Mammary epithelial cell (primary cell): ENCODE measurements at regions of chr12 and their contacts with region 1.

Region 1: GRCh38 chr12:77010691-77011548 is 54.4 kb downstream of the E2F7 start:
- DNase-seq: peak; percentile 50
- H3K4me3 ChIP-seq: no peak overlapping the region
- H3K27ac ChIP-seq: no peak overlapping the region
- H3K4me1 ChIP-seq: no peaks in the 10 kb centered on the region
- H3K27me3 ChIP-seq: no peaks in the 10 kb centered on the region
- CTCF ChIP-seq: peak; percentile 99

Region 2: DNA sequence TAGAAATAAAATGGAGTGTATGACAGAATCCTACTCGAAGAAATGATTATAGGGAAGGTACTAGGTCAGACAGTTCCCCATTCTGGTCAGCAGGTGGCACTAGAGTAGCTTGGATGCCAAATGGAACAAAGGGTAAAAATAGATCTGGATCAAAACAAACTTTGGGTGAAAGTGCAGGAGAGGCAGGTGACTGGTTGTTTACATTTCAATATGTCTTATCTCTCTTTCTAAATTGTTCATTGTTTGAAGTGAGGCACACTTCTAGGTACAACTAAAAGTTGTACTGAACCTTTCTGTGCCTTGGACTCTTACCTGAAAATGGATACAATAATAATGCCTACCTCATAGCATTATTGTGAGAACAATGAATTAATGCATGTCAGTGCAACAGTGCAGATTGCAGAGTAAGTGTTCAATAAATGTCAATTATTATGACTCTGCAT is 389.3 kb before region 1 on chr12:
- CTCF ChIA-PET with region 1: interaction called, 4 read pairs
- dilution Hi-C with region 1: no loop called
- in situ Hi-C with region 1: no loop called
- intact Hi-C with region 1: loop called (anchors 1 kb)
- DNase-seq: peak; percentile 48
- H3K4me3 ChIP-seq: no peak overlapping the region
- H3K27ac ChIP-seq: no peak overlapping the region
- H3K4me1 ChIP-seq: no peaks in the 10 kb centered on the region
- H3K27me3 ChIP-seq: no peaks in the 10 kb centered on the region
- CTCF ChIP-seq: peak; percentile 90 to 96

Region 3: DNA sequence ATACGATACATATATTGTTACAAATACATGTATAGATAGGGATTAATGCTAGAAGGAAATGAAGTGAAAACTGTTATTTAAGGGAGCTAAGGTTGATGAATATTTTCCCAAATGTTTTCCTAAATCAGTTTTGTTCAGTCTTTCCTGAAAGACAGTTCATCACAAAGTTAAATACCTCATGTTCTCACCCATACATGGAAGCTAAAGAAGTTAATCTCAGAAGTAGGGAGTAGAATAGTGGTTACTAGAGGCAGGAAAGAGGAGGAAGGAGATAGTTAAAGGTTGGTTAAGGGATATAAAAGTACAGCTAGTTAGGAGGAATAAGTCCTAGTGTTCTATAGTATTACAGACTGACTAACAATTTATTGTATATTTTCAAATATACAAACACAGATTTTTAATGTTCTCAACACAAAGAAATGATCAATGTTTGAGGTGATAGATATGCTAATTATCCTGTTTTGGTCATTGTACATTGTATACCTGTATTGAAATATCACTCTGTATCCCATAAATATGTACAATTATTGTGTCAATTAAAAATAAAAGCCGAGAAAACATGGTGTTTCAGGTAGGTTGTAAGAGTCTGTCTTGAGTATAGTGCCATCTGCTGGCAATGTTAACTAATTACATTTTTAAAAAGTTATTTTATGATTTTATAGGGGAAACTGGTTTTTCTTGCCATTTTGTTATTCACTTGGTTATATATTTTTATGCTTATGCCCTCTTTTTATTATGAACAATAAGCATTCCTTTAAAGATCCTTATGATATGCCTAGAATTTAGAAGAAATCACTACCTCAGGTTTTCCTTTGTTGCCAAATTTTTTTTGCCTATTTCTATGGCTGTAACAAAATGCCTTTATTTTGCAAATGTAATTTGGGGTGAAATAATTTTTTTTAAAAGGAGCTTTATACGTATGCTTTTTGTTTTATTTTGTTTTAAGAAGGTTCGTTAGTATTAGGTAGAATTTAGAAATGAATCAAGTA is 220.1 kb before region 1 on chr12:
- CTCF ChIA-PET with region 1: no interaction called
- dilution Hi-C with region 1: no loop called
- in situ Hi-C with region 1: no loop called
- intact Hi-C with region 1: loop called (anchors 1 kb)
- DNase-seq: no peak
- H3K4me3 ChIP-seq: no peak overlapping the region
- H3K27ac ChIP-seq: no peak overlapping the region
- H3K4me1 ChIP-seq: no peaks in the 10 kb centered on the region
- H3K27me3 ChIP-seq: no peaks in the 10 kb centered on the region
- CTCF ChIP-seq: peak; percentile 34 to 60

Region 4: DNA sequence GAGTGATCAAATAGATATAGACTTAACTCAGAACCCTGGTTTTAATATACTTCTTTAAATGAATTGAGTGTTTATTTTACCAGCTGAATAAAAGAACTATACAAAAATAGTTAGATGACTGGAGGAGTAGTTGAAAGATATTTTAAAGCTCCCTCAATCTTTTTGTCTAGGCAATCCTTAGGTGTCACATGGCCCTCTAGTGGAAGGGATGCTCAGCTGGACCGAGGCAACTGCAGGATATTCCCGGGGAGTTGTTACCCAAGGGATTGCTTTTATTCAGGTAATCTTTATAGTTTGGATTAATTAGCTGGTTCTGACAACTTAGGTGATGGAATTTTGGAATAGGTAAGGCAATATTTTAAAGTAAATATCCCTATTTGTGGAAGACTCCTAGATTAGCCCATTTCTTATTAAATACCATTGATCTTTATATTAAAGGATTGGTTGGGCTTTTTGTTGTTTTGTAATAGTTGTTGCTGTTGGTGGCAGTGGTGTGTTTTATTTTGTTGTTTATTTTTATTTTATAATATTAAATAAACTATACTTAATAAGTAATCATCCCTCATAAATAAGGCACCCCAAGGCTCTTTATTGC is 189.9 kb before region 1 on chr12:
- CTCF ChIA-PET with region 1: interaction called, 4 read pairs
- dilution Hi-C with region 1: no loop called
- in situ Hi-C with region 1: no loop called
- intact Hi-C with region 1: loop called (anchors 1 kb)
- DNase-seq: peak; percentile 29
- H3K4me3 ChIP-seq: no peak overlapping the region
- H3K27ac ChIP-seq: no peak overlapping the region
- H3K4me1 ChIP-seq: no peaks in the 10 kb centered on the region
- H3K27me3 ChIP-seq: no peaks in the 10 kb centered on the region
- CTCF ChIP-seq: peak; percentile 74

Region 5: GRCh38 chr12:76878899-76879709 is 131.8 kb before region 1 on chr12 and contains the start of gene CSRP2:
- CTCF ChIA-PET with region 1: no interaction called
- dilution Hi-C with region 1: no loop called
- in situ Hi-C with region 1: no loop called
- intact Hi-C with region 1: loop called (anchors 2 kb)
- DNase-seq: peak; percentile 90
- H3K4me3 ChIP-seq: peak within 1 kb of the TSS; percentile 72 to 81 (median 80)
- H3K27ac ChIP-seq: peak within 1 kb of the TSS; percentile 81
- H3K4me1 ChIP-seq: peaks cover 46% of the 10 kb centered on the region
- H3K27me3 ChIP-seq: no peaks in the 10 kb centered on the region
- CTCF ChIP-seq: peak in 1 of 2 donors; percentile 13
- total RNA-seq, gene CSRP2: 21.0 to 45.9 TPM

Region 6: GRCh38 chr12:76927170-76927784 is 83.6 kb before region 1 on chr12:
- CTCF ChIA-PET with region 1: no interaction called
- dilution Hi-C with region 1: no loop called
- in situ Hi-C with region 1: no loop called
- intact Hi-C with region 1: loop called (anchors 1 kb)
- DNase-seq: peak; percentile 25
- H3K4me3 ChIP-seq: no peak overlapping the region
- H3K27ac ChIP-seq: no peak overlapping the region
- H3K4me1 ChIP-seq: no peaks in the 10 kb centered on the region
- H3K27me3 ChIP-seq: no peaks in the 10 kb centered on the region
- CTCF ChIP-seq: peak; percentile 65 to 80

Region 7: GRCh38 chr12:76952995-76953394 is 57.9 kb before region 1 on chr12:
- CTCF ChIA-PET with region 1: interaction called, 8 read pairs
- dilution Hi-C with region 1: no loop called
- in situ Hi-C with region 1: no loop called
- intact Hi-C with region 1: loop called (anchors 1 kb)
- DNase-seq: peak; percentile 74
- H3K4me3 ChIP-seq: no peak overlapping the region
- H3K27ac ChIP-seq: peak overlapping the region; percentile 11
- H3K4me1 ChIP-seq: peaks cover 16% of the 10 kb centered on the region
- H3K27me3 ChIP-seq: no peaks in the 10 kb centered on the region
- CTCF ChIP-seq: peak in 1 of 2 donors; percentile 56

Region 8: GRCh38 chr12:77210724-77211123 is 199.8 kb after region 1 on chr12:
- CTCF ChIA-PET with region 1: no interaction called
- dilution Hi-C with region 1: no loop called
- in situ Hi-C with region 1: no loop called
- intact Hi-C with region 1: no loop called
- DNase-seq: no peak
- H3K4me3 ChIP-seq: no peak overlapping the region
- H3K27ac ChIP-seq: no peak overlapping the region
- H3K4me1 ChIP-seq: peaks cover 8% of the 10 kb centered on the region
- H3K27me3 ChIP-seq: no peaks in the 10 kb centered on the region
- CTCF ChIP-seq: no peak